ENCODE measurements at regions of chr21 and their contacts with region 1.

Region 1: DNA sequence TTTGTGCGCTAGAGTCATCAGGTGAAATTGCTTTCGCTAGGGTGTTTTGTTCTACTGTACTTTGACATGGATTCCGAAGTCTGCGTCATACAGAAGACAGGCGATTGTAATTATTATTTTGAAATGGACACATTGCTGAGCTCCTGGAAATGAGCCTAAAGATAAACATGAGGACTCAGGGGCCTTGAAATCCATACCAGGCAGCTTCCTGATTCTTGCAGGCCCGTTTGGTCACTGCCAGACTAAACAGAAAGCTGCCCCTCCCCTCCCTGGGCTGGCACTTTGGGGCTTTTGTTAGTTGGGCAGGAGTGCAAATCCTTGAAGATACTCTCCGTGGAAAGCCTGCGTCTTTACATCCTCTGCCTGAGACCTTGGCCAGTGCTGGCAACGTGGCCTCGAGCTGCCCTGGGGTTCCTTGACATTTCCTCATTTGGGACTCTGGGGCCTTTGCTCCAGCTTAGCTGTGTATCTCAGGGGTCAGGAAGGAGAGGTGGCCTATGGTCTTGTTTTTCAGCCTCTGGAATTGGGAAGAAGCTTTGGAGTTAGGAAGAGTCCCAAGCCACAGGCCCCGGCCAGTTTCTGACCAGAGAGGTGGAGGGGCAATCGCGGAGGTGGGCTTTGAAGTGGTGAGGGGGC is 26.9 kb upstream of the KCNE2 start:
- DNase-seq: no peak
- H3K4me3 Mint-ChIP-seq: no peak overlapping the region
- H3K27ac Mint-ChIP-seq: no peak overlapping the region
- H3K4me1 Mint-ChIP-seq: peaks cover 3% of the 10 kb centered on the region
- H3K27me3 Mint-ChIP-seq: no peaks in the 10 kb centered on the region

Region 2: GRCh38 chr21:34061983-34062382 is 274.9 kb before region 1 on chr21:
- CTCF ChIA-PET with region 1: no interaction called
- POLR2A ChIA-PET with region 1: no interaction called
- DNase-seq: peak; percentile 16
- H3K4me3 Mint-ChIP-seq: no peak overlapping the region
- H3K27ac Mint-ChIP-seq: no peak overlapping the region
- H3K4me1 Mint-ChIP-seq: no peaks in the 10 kb centered on the region
- H3K27me3 Mint-ChIP-seq: peaks cover 5% of the 10 kb centered on the region

Region 3: GRCh38 chr21:34351786-34352241 is 14.9 kb after region 1 on chr21:
- CTCF ChIA-PET with region 1: interaction called, 13 read pairs
- POLR2A ChIA-PET with region 1: no interaction called
- DNase-seq: peak; percentile 23
- H3K4me3 Mint-ChIP-seq: no peak overlapping the region
- H3K27ac Mint-ChIP-seq: no peak overlapping the region
- H3K4me1 Mint-ChIP-seq: peaks cover 11% of the 10 kb centered on the region
- H3K27me3 Mint-ChIP-seq: peaks cover 9% of the 10 kb centered on the region